ENCODE measurements at regions of chr18 and their contacts with region 1.

Region 1: DNA sequence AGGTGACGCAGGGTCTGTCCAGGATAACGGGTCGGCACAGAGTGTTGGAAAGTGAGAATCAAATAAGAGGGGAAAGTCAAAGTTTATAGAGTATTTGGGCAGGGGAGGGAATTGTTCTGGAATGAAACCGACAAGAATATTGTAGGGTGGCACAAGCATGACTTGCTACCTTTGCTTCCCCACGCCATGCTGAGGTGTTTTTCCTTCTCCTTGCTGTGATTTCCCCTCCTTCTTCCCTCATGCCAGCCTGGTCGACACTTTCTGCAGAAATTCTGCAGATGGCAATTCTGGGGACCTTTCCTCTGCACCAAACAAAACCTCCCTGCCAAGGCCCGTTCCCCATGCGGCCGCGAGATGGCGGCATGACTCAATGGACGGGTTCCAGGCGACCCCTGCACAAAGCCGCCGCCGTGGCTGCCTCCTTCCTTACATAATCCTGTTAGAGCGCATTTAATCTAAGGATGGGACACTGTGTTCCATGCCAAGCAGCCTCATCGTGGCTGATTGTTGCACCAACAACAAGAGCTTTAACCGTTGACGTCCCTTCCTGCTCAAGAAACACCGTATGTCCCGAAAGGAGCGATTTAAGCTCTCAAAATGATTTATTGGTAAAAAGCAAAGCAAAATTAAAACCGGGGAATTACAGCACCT is at the start of gene MRO:
- DNase-seq: peak; percentile 69 to 91 (median 84)
- ATAC-seq: peak; percentile 93 to 98 (median 96)
- H3K4me3 ChIP-seq: peak within 1 kb of the TSS; percentile 6 to 42 (median 20)
- H3K27ac ChIP-seq: peak within 1 kb of the TSS; percentile 27 to 53 (median 50)
- H3K4me1 ChIP-seq: peaks cover 0 to 6% (median 5%) of the 10 kb centered on the region in 3 donors
- H3K27me3 ChIP-seq: no peaks in the 10 kb centered on the region
- CTCF ChIP-seq: peak; percentile 68 to 93 (median 81)
- total RNA-seq, gene MRO: 0.66 to 3.9 (median 1.3) TPM

Region 2: DNA sequence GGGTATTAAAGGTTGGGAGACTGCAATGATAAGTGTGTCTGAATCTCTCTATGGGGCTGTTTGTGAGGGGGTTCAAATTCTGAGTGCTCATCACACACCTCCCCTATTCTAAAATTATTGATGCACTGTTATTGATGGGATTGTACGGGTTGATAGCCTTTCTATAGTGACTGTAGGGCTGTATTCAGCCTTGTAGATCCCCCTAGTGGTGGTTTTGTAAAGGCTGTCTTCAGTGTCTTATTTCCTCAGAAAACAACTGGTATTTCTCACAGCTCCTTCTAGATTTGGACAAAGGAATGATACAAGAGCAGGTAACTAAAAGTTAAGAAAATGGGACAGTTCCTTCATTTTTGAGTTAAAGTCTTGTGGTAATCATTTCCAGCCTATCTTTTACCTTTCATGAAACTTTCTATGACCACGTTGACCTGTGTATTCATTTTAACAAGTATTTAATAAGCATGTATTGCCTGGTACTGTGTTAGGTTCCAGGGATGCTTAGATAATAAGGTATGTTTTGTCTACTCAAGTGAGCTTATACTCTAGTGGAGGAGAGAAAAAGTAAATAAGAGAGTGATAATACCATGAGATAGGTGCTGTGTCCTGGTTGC is 231.4 kb after region 1 on chr18:
- intact Hi-C with region 1: loop called in 1 of 3 experiments (anchors 10 kb)
- DNase-seq: no peak
- ATAC-seq: peak; percentile 77 to 94 (median 90)
- H3K4me3 ChIP-seq: no peak overlapping the region
- H3K27ac ChIP-seq: no peak overlapping the region
- H3K4me1 ChIP-seq: peaks cover 0 to 7% (median 0%) of the 10 kb centered on the region in 3 donors
- H3K27me3 ChIP-seq: no peaks in the 10 kb centered on the region
- CTCF ChIP-seq: peak; percentile 59 to 81 (median 73)

Region 3: GRCh38 chr18:51110073-51110803 is 290.4 kb after region 1 on chr18:
- intact Hi-C with region 1: no loop called
- DNase-seq: peak; percentile 21 to 97 (median 75)
- ATAC-seq: peak; percentile 95 to 99 (median 98)
- H3K4me3 ChIP-seq: no peak overlapping the region
- H3K27ac ChIP-seq: no peak overlapping the region
- H3K4me1 ChIP-seq: no peaks in the 10 kb centered on the region
- H3K27me3 ChIP-seq: no peaks in the 10 kb centered on the region
- CTCF ChIP-seq: peak; percentile 92 to 98 (median 95)

Measured in pancreas (tissue), 10 donors.